GM10248 (cell line): ENCODE measurements at regions of chr6 and their contacts with region 1.

Region 1: GRCh38 chr6:41424370-41425058 is 89.1 kb downstream of the NCR2 start:
- DNase-seq: peak; percentile 77
- CTCF ChIP-seq: peak; percentile 89

Region 2: GRCh38 chr6:41413250-41413649 is 11.3 kb before region 1 on chr6:
- CTCF ChIA-PET with region 1: interaction called, 43 read pairs
- POLR2A ChIA-PET with region 1: no interaction called
- DNase-seq: no peak
- CTCF ChIP-seq: no peak

Region 3: GRCh38 chr6:41449399-41450245 is 25.1 kb after region 1 on chr6:
- CTCF ChIA-PET with region 1: interaction called, 19 read pairs
- POLR2A ChIA-PET with region 1: no interaction called
- DNase-seq: no peak
- CTCF ChIP-seq: no peak

Region 4: DNA sequence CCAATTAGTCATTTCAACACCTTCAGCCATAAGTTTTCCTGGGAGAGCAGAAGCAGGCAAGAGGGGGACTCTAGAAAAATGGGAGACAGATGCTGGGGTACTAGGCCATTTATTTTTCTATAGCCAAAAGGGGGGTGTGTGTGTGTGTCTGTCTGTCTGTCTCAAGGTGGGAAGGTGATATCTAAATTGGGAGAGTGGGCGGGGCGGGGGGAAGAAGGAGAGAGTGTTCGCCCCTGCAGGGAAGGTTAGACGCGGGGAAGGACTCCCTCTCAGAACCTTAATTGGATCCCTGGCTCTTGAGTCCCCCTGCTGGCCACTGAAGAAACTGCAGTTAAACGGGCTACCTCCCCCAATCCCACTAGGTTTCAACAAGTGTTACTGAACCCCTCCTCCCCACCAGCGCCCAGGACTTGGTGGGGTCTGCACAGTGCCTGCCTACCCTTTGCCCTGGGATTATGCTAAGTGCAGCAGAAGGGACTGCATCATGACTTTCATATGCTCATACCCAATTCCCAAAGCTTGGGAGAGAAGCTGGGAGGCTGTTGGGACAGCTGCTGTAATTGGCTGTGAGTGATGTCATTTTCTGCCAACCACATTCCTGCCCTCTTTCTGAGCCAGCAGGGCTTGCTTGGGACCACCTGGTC is 167.5 kb after region 1 on chr6:
- CTCF ChIA-PET with region 1: interaction called, 83 read pairs
- POLR2A ChIA-PET with region 1: no interaction called
- DNase-seq: peak; percentile 89
- CTCF ChIP-seq: peak; percentile 80